ENCODE measurements at regions of chr18 and their contacts with region 1.

Region 1: DNA sequence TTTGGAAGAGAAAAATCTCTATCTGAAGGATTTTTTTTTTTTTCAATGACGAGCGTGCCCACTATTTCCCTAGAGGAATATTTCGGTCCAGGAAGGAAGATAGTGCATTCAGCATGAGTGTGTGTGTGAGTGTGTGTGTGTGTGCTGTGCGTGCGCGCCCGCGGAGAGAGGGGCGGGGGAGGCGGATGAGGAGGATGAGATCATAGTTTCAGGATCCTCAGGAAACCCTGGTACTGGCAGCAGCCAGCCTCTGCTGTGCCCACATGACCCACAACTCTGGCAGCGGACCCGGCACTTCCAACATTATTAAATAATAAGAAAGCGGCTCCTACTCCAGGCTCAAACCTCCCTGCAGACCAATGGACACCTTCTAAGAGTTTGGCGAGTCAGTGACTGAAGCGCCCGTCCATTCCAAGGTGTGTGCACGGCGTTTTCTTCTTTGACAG is 217.0 kb upstream of the DTNA start:
- DNase-seq: peak; percentile 72
- ATAC-seq: peak; percentile 82
- H3K4me3 ChIP-seq: peak overlapping the region; percentile 78 to 93 (median 81)
- H3K27ac ChIP-seq: peak overlapping the region; percentile 43
- H3K4me1 ChIP-seq: peaks cover 14% of the 10 kb centered on the region; the same call in 1 of the 2 replicates
- H3K27me3 ChIP-seq: no peaks in the 10 kb centered on the region
- CTCF ChIP-seq: no peak
- EP300 ChIP-seq: no peak
- POLR2A ChIP-seq: 0 out of 4 replicates have a peak, but pooled peaks of 1 of the 2 experiments have one; percentile 31
- RAD21 ChIP-seq: no peak

Region 2: GRCh38 chr18:34352385-34353163 is 140.5 kb before region 1 on chr18:
- CTCF ChIA-PET with region 1: no interaction called
- POLR2A ChIA-PET with region 1: no interaction called
- in situ Hi-C with region 1: no loop called
- intact Hi-C with region 1: loop called (anchors 5 kb)
- DNase-seq: peak; percentile 22
- ATAC-seq: no peak
- H3K4me3 ChIP-seq: no peak overlapping the region
- H3K27ac ChIP-seq: no peak overlapping the region
- H3K4me1 ChIP-seq: no peaks in the 10 kb centered on the region
- H3K27me3 ChIP-seq: no peaks in the 10 kb centered on the region
- CTCF ChIP-seq: peak; percentile 39
- EP300 ChIP-seq: no peak
- POLR2A ChIP-seq: no peak
- RAD21 ChIP-seq: no peak

Region 3: GRCh38 chr18:34397286-34397896 is 95.7 kb before region 1 on chr18:
- CTCF ChIA-PET with region 1: no interaction called
- POLR2A ChIA-PET with region 1: no interaction called
- in situ Hi-C with region 1: no loop called
- intact Hi-C with region 1: loop called (anchors 5 kb)
- DNase-seq: peak; percentile 70
- ATAC-seq: peak; percentile 96
- H3K4me3 ChIP-seq: peak overlapping the region in 1 of 3 experiments; percentile 11; a peak in 2 of 6 replicates
- H3K27ac ChIP-seq: peak overlapping the region; percentile 77
- H3K4me1 ChIP-seq: peaks cover 31% of the 10 kb centered on the region
- H3K27me3 ChIP-seq: no peaks in the 10 kb centered on the region
- CTCF ChIP-seq: no peak
- EP300 ChIP-seq: peak in 1 of 2 experiments; percentile 1; a peak in 1 of 4 replicates
- POLR2A ChIP-seq: no peak
- RAD21 ChIP-seq: no peak

Region 4: GRCh38 chr18:34548118-34548972 is 55.2 kb after region 1 on chr18:
- CTCF ChIA-PET with region 1: no interaction called
- POLR2A ChIA-PET with region 1: no interaction called
- in situ Hi-C with region 1: no loop called
- intact Hi-C with region 1: loop called (anchors 5 kb)
- DNase-seq: peak; percentile 14
- ATAC-seq: peak; percentile 61
- H3K4me3 ChIP-seq: no peak overlapping the region
- H3K27ac ChIP-seq: no peak overlapping the region
- H3K4me1 ChIP-seq: no peaks in the 10 kb centered on the region
- H3K27me3 ChIP-seq: no peaks in the 10 kb centered on the region
- CTCF ChIP-seq: no peak
- EP300 ChIP-seq: no peak
- POLR2A ChIP-seq: no peak
- RAD21 ChIP-seq: no peak

Region 5: GRCh38 chr18:34639687-34640086 is 146.6 kb after region 1 on chr18:
- CTCF ChIA-PET with region 1: no interaction called
- POLR2A ChIA-PET with region 1: no interaction called
- in situ Hi-C with region 1: no loop called
- intact Hi-C with region 1: loop called (anchors 10 kb)
- DNase-seq: no peak
- ATAC-seq: no peak
- H3K4me3 ChIP-seq: no peak overlapping the region
- H3K27ac ChIP-seq: no peak overlapping the region
- H3K4me1 ChIP-seq: no peaks in the 10 kb centered on the region
- H3K27me3 ChIP-seq: no peaks in the 10 kb centered on the region
- CTCF ChIP-seq: no peak
- EP300 ChIP-seq: no peak
- POLR2A ChIP-seq: no peak
- RAD21 ChIP-seq: no peak

Region 6: GRCh38 chr18:34661464-34662111 is 168.5 kb after region 1 on chr18:
- CTCF ChIA-PET with region 1: no interaction called
- POLR2A ChIA-PET with region 1: no interaction called
- in situ Hi-C with region 1: no loop called
- intact Hi-C with region 1: loop called (anchors 2 kb)
- DNase-seq: peak; percentile 48
- ATAC-seq: peak; percentile 90
- H3K4me3 ChIP-seq: no peak overlapping the region
- H3K27ac ChIP-seq: no peak overlapping the region
- H3K4me1 ChIP-seq: peaks cover 11% of the 10 kb centered on the region
- H3K27me3 ChIP-seq: no peaks in the 10 kb centered on the region
- CTCF ChIP-seq: peak; percentile 73
- EP300 ChIP-seq: no peak
- POLR2A ChIP-seq: no peak
- RAD21 ChIP-seq: no peak; the same call in 1 of the 2 replicates

Region 7: GRCh38 chr18:34787931-34788532 is 294.9 kb after region 1 on chr18:
- CTCF ChIA-PET with region 1: no interaction called
- POLR2A ChIA-PET with region 1: no interaction called
- in situ Hi-C with region 1: no loop called
- intact Hi-C with region 1: no loop called
- DNase-seq: peak; percentile 60
- ATAC-seq: peak; percentile 67
- H3K4me3 ChIP-seq: no peak overlapping the region
- H3K27ac ChIP-seq: no peak overlapping the region
- H3K4me1 ChIP-seq: no peaks in the 10 kb centered on the region
- H3K27me3 ChIP-seq: no peaks in the 10 kb centered on the region
- CTCF ChIP-seq: peak; percentile 77
- EP300 ChIP-seq: no peak
- POLR2A ChIP-seq: no peak
- RAD21 ChIP-seq: 0 out of 2 replicates have a peak, but pooled peaks have one; percentile 19

Measured in HepG2 (cell line).